ENCODE measurements at regions of chr5 and their contacts with region 1.

Region 1: DNA sequence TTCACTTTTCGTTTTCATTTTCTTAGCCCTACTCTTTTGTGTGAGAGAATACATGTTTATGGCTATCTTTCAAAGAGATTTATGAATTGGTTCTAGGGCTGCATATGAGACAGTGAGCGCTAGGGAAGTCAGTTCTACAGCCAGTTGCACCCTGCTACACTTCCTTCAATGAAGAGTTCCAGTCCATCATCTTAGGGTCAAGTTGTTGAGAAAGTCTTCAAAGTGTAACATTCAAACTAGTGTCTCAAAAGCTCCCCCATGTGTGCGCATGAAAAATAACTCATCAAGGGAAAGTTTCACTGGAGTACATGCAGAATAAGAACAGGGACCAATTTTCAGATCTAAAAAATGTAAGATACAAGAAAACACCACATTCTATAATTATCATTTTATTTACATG is 317.2 kb downstream of the DEPDC1B start:
- DNase-seq: peak in 1 of 2 experiments; percentile 18
- H3K4me3 ChIP-seq: no peak overlapping the region
- H3K4me3 Mint-ChIP-seq: no peak overlapping the region
- H3K27ac Mint-ChIP-seq: no peak overlapping the region
- H3K4me1 ChIP-seq: no peaks in the 10 kb centered on the region
- H3K4me1 Mint-ChIP-seq: no peaks in the 10 kb centered on the region
- H3K27me3 ChIP-seq: no peaks in the 10 kb centered on the region
- H3K27me3 Mint-ChIP-seq: peaks cover 12% of the 10 kb centered on the region
- CTCF ChIP-seq: peak; percentile 39

Region 2: DNA sequence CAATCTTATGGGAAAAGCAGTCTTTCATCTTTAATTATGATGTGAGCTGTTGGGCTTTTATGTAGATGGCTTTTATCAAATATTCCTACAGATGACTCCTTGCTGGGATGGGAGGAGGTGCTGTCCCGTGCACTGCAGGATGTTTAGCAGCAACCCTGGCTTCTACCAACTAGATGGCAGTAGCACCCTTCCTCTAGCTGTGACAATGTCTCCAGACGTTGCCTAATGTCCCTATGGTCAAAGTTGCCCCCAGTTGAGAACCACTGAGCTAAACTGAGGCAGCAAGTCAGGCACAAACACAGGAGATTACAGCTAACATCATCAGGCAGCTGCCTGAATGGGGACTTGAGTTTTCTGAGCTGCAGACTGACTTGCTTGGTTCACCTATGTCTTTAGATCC is 87.3 kb before region 1 on chr5:
- CTCF ChIA-PET with region 1: no interaction called
- POLR2A ChIA-PET with region 1: no interaction called
- intact Hi-C with region 1: loop called (anchors 1 kb)
- DNase-seq: peak; percentile 39 to 40
- H3K4me3 ChIP-seq: no peak overlapping the region
- H3K4me3 Mint-ChIP-seq: no peak overlapping the region
- H3K27ac Mint-ChIP-seq: no peak overlapping the region
- H3K4me1 ChIP-seq: no peaks in the 10 kb centered on the region
- H3K4me1 Mint-ChIP-seq: no peaks in the 10 kb centered on the region
- H3K27me3 ChIP-seq: no peaks in the 10 kb centered on the region
- H3K27me3 Mint-ChIP-seq: no peaks in the 10 kb centered on the region
- CTCF ChIP-seq: peak; percentile 61 to 70

Region 3: DNA sequence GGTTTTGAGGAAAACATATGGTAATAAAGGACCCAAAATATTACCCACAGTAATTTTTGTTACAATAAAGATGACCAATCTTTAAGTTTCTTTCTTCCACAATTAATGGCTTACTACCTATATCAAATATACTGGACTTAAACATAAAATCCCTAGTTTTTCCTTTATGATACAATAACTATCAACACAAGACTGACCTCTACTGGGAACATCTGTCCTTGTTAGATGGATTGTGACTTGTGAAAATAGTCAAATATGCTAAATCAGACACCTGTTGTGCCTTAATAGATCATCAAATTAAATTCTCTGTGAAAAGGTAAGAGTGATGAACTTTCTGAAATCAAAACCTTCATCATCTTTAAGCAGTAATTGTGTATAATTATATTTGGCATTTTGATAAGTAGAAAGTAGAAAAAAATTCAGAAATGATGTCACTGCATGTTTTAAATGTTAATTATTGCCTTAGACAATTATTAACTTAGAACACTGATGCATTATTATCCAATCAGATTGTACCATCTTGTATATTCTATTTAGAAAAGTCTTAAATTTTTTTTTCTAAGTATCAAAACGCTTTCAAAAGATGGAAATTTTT is 203.7 kb after region 1 on chr5:
- CTCF ChIA-PET with region 1: no interaction called
- POLR2A ChIA-PET with region 1: no interaction called
- intact Hi-C with region 1: loop called (anchors 10 kb)
- DNase-seq: no peak
- H3K4me3 ChIP-seq: no peak overlapping the region
- H3K4me3 Mint-ChIP-seq: no peak overlapping the region
- H3K27ac Mint-ChIP-seq: no peak overlapping the region
- H3K4me1 ChIP-seq: no peaks in the 10 kb centered on the region
- H3K4me1 Mint-ChIP-seq: no peaks in the 10 kb centered on the region
- H3K27me3 ChIP-seq: no peaks in the 10 kb centered on the region
- H3K27me3 Mint-ChIP-seq: no peaks in the 10 kb centered on the region
- CTCF ChIP-seq: peak; percentile 27 to 54

Measured in Caco-2 (cell line).